GM18951 (cell line): ENCODE measurements at regions of chr22 and their contacts with region 1.

Region 1: DNA sequence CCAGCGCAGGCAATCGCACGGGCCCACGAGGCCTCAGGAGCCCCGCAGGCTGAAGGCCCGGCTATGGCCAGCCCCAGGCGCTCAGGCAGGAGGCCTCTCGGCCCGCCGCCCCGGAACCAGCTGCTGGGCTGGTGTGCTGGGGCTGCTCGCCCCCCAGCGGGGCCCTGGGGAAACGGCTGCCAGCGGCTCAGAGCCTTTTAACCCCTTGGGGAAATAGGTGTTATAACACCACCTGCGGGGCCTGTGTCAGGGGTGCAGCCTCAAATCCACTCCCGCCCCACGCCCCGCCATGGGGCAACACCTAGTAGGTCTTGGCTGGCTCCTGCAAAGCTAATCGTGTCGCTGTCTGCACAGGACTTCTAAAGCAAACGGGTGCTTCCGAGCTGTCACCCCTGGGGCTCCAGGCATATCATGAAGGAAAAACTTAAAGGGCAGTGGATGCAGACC is 237.4 kb downstream of the TTC28 start:
- POLR2A ChIP-seq: no peak

Region 2: DNA sequence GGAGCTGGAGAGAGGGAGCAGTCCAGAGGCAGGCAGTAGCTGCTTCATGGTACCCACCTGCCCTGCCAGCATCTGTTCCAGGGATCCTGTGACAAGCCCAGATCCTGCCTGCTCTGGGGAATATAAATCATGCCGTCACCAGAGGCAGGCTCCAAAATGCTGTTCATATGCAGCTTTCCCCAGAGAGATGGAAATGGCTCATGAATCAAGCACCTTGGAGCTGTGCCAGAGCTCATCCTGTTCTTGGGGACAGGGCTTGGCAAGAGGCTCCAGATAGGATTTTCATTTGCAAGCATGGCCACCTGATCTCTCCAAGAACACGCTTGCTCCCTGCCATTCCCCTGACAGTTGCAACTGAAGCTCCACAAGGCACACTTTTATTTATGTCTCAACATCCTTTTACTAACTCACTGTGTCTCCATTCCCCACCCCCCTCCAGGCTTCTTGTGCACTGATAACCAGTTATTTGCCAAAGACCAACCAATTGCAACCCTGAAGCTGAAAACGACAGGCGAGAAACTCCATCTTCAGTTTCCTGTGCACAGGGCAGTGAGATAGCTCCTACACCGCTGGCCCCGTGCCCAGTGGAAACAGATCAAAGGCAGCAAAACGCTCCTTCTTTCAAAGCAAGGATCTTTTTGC is 407.4 kb before region 1 on chr22:
- in situ Hi-C with region 1: loop called (anchors 25 kb)
- POLR2A ChIP-seq: no peak